ENCODE measurements at regions of chr18 and their contacts with region 1.

Region 1: DNA sequence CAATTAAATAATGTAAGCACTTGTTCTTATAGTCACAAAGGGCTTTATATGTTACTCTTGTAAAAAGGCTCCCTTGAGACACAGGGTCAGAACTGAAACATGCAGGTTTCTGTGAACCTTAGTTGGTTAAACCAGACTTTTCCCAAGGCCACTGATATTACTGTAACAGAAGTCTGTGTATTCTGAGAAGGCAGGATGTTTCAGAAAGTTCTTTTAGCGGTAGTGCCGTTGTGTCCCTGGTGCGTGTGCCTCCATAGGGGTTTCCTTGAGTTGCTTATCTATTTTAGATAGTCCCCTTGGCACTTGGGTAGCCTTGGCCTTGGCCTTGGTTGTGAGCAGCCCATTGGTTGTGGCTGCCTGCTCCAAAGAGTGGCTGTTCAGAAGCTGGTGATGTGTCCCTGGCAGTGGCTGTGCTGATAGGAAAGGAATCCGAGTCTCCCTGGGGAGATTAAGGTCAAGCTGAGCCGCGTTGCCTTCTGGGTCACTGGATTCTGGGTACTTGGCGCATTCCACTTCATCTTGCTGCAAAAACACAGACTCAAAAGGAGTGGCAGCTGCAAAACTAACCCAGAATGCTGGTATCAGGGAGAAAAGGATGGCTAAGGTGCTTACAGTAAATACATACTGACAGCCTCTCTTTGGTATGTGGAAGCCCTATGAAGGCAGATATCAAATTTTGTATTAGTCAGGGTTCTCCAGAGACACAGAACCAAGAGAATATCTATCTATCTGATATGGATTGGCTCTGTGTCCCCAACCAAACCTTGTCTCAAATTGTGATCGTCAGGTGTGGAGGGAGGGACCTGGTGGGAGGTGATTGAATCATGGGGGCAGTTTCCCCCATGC is 69.7 kb downstream of the FHOD3 start:
- DNase-seq: no peak
- H3K4me3 ChIP-seq: no peak overlapping the region
- H3K27ac ChIP-seq: no peak overlapping the region
- H3K4me1 ChIP-seq: no peaks in the 10 kb centered on the region
- H3K27me3 ChIP-seq: peaks cover 0 to 3% of the 10 kb centered on the region in 2 experiments
- CTCF ChIP-seq: no peak
- POLR2A ChIP-seq: no peak

Region 2: DNA sequence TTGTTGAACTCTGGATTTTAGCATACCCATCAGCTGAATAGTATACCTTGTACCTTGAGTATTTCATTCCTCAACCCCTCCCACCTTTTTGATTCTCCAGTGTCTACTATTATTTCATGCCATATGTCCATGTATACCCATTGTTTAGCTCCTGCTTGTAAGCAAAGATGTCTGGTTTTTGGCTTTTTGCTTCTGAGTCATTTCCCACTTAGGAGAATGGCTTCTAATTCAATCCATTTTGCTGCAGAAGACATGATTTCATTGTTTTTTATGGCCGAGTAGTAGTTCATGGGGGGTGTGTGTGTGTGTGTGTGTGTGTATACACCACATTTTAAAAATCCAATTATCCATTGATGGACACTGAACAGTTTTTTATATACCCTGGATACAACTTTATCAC is 204.2 kb before region 1 on chr18:
- CTCF ChIA-PET with region 1: no interaction called
- POLR2A ChIA-PET with region 1: no interaction called
- dilution Hi-C with region 1: no loop called
- intact Hi-C with region 1: no loop called
- DNase-seq: peak; percentile 79
- H3K4me3 ChIP-seq: no peak overlapping the region
- H3K27ac ChIP-seq: peak overlapping the region; percentile 63
- H3K4me1 ChIP-seq: peaks cover 32% of the 10 kb centered on the region
- H3K27me3 ChIP-seq: no peaks in the 10 kb centered on the region
- CTCF ChIP-seq: no peak
- POLR2A ChIP-seq: no peak

Region 3: GRCh38 chr18:36389811-36390581 is 22.8 kb after region 1 on chr18:
- CTCF ChIA-PET with region 1: no interaction called
- POLR2A ChIA-PET with region 1: no interaction called
- dilution Hi-C with region 1: no loop called
- intact Hi-C with region 1: loop called (anchors 1 kb)
- DNase-seq: no peak
- H3K4me3 ChIP-seq: no peak overlapping the region
- H3K27ac ChIP-seq: no peak overlapping the region
- H3K4me1 ChIP-seq: no peaks in the 10 kb centered on the region
- H3K27me3 ChIP-seq: no peaks in the 10 kb centered on the region
- CTCF ChIP-seq: no peak
- POLR2A ChIP-seq: no peak

Region 4: GRCh38 chr18:36680042-36680441 is 312.8 kb after region 1 on chr18:
- CTCF ChIA-PET with region 1: no interaction called
- POLR2A ChIA-PET with region 1: no interaction called
- dilution Hi-C with region 1: no loop called
- intact Hi-C with region 1: no loop called
- DNase-seq: no peak
- H3K4me3 ChIP-seq: no peak overlapping the region
- H3K27ac ChIP-seq: no peak overlapping the region
- H3K4me1 ChIP-seq: no peaks in the 10 kb centered on the region
- H3K27me3 ChIP-seq: no peaks in the 10 kb centered on the region
- CTCF ChIP-seq: no peak
- POLR2A ChIP-seq: no peak

Measured in endothelial cell of umbilical vein (primary cell).